ENCODE measurements at regions of chr1 and their contacts with region 1.

Region 1: GRCh38 chr1:104120525-104120924 is 370.8 kb downstream of the AMY1C start:
- DNase-seq: no peak
- H3K4me3 ChIP-seq: no peak overlapping the region
- H3K27ac ChIP-seq: no peak overlapping the region
- H3K4me1 ChIP-seq: no peaks in the 10 kb centered on the region
- H3K27me3 ChIP-seq: no peaks in the 10 kb centered on the region
- CTCF ChIP-seq: no peak
- EP300 ChIP-seq: no peak
- POLR2A ChIP-seq: no peak

Region 2: GRCh38 chr1:104136621-104137020 is 16.1 kb after region 1 on chr1:
- in situ Hi-C with region 1: no loop called
- intact Hi-C with region 1: loop called (anchors 1 kb)
- DNase-seq: no peak
- H3K4me3 ChIP-seq: no peak overlapping the region
- H3K27ac ChIP-seq: no peak overlapping the region
- H3K4me1 ChIP-seq: no peaks in the 10 kb centered on the region
- H3K27me3 ChIP-seq: no peaks in the 10 kb centered on the region
- CTCF ChIP-seq: no peak
- EP300 ChIP-seq: no peak
- POLR2A ChIP-seq: no peak

Region 3: GRCh38 chr1:104182251-104182650 is 61.7 kb after region 1 on chr1:
- in situ Hi-C with region 1: no loop called
- intact Hi-C with region 1: no loop called
- DNase-seq: no peak
- H3K4me3 ChIP-seq: no peak overlapping the region
- H3K27ac ChIP-seq: no peak overlapping the region
- H3K4me1 ChIP-seq: no peaks in the 10 kb centered on the region
- H3K27me3 ChIP-seq: no peaks in the 10 kb centered on the region
- CTCF ChIP-seq: no peak
- EP300 ChIP-seq: no peak
- POLR2A ChIP-seq: no peak

Measured in transverse colon (tissue), 4 donors.